ENCODE measurements at regions of chr3 and their contacts with region 1.

Region 1: GRCh38 chr3:3200632-3201212 is 21.2 kb upstream of the CRBN start:
- DNase-seq: no peak
- ATAC-seq: peak in 3 of 4 donors; percentile 63 to 83 (median 64)
- H3K4me3 ChIP-seq: no peak overlapping the region
- H3K27ac ChIP-seq: no peak overlapping the region
- H3K4me1 ChIP-seq: no peaks in the 10 kb centered on the region
- H3K27me3 ChIP-seq: no peaks in the 10 kb centered on the region
- CTCF ChIP-seq: peak; percentile 82

Region 2: GRCh38 chr3:3998140-3998922 is 797.6 kb after region 1 on chr3:
- intact Hi-C with region 1: loop called (anchors 2 to 5 kb)
- DNase-seq: no peak
- ATAC-seq: peak in 2 of 4 donors; percentile 42 to 49
- H3K4me3 ChIP-seq: no peak overlapping the region
- H3K27ac ChIP-seq: no peak overlapping the region
- H3K4me1 ChIP-seq: no peaks in the 10 kb centered on the region
- H3K27me3 ChIP-seq: no peaks in the 10 kb centered on the region
- CTCF ChIP-seq: peak; percentile 55

Region 3: DNA sequence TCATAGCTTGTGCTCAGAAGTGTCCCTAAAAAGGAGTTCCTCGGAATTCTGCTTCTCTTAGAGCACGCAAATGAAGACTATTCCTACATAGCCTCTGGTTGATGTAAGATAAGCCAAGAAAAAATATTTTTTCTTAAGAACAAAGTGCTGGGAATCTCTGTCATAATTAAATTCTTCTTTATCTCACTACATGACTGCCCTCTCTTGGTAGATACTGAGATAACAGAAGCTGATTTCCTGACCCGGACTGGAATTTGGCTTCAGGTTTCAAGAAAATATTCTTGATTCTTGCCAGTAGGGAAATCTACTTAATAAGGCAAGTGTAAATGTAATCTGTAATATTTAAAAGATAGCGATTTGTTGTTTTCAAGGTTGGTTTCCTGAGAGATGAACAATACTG is 1071.1 kb after region 1 on chr3:
- intact Hi-C with region 1: loop called in 1 of 2 experiments (anchors 5 kb)
- DNase-seq: no peak
- ATAC-seq: peak in 1 of 4 donors; percentile 61
- H3K4me3 ChIP-seq: no peak overlapping the region
- H3K27ac ChIP-seq: no peak overlapping the region
- H3K4me1 ChIP-seq: no peaks in the 10 kb centered on the region
- H3K27me3 ChIP-seq: no peaks in the 10 kb centered on the region
- CTCF ChIP-seq: peak; percentile 53

Region 4: GRCh38 chr3:4290272-4290893 is 1089.7 kb after region 1 on chr3:
- intact Hi-C with region 1: loop called (anchors 2 to 5 kb)
- DNase-seq: no peak
- ATAC-seq: peak in 3 of 4 donors; percentile 54 to 71 (median 63)
- H3K4me3 ChIP-seq: no peak overlapping the region
- H3K27ac ChIP-seq: no peak overlapping the region
- H3K4me1 ChIP-seq: no peaks in the 10 kb centered on the region
- H3K27me3 ChIP-seq: no peaks in the 10 kb centered on the region
- CTCF ChIP-seq: peak; percentile 89

Measured in psoas muscle (tissue), 8 donors.